Activated naive CD8-positive, alpha-beta T cell treated with anti-CD3 and anti-CD28 coated beads, Interleukin-2, amount 10 ng/mL, durations not matched to agents 7 days and 5 days (primary cell): ENCODE measurements at regions of chr12 and their contacts with region 1.

Region 1: DNA sequence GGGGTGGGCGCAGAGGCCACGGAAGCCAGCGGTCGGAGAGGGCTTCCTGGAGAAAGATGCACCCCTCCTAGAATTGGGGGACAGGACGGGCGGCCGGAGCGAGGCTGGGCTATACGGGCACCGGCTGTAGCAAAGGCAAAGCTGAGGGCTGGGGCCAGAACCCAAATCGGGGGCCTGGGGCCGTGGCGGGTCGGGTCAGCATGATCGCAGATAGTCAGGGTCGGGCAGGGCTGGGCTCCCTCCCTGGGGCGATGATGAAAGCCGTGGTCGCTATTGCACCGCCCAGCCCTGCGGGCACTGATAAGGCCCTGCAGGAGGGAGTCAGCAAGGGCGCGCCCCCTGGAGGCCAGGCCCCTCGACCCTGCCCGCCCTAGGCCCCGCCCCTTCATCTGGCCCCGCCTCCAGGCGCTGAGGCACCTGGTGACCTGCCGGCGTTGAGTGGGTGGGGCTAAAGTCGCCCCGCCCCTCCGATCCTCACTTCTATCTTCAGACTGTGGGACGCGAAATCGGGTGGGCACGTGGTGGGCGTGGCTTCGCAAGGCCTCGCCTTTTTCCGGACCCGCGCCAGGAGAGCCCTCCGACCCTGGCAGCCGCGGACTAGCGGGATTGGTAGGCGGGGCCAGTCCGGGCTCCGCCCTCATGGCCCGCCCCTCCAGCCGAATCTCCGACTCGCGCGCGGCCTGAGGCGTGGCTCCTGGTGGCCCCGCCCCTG is 418 bp upstream of the SH2B3 start:
- DNase-seq: peak; percentile 100
- ATAC-seq: peak; percentile 78
- H3K4me3 Mint-ChIP-seq: peak overlapping the region; percentile 95
- H3K27ac Mint-ChIP-seq: peak overlapping the region; percentile 94
- H3K4me1 Mint-ChIP-seq: peaks cover 45% of the 10 kb centered on the region
- H3K27me3 Mint-ChIP-seq: no peaks in the 10 kb centered on the region

Region 2: GRCh38 chr12:111444925-111445725 is 39.8 kb after region 1 on chr12:
- POLR2A ChIA-PET with region 1: interaction called, 52 read pairs
- DNase-seq: peak; percentile 77
- ATAC-seq: peak; percentile 94
- H3K4me3 Mint-ChIP-seq: peak overlapping the region; percentile 76
- H3K27ac Mint-ChIP-seq: peak overlapping the region; percentile 91
- H3K4me1 Mint-ChIP-seq: peaks cover 70% of the 10 kb centered on the region
- H3K27me3 Mint-ChIP-seq: no peaks in the 10 kb centered on the region

Region 3: GRCh38 chr12:111451649-111452129 is 46.4 kb after region 1 on chr12:
- POLR2A ChIA-PET with region 1: interaction called, 30 read pairs
- DNase-seq: no peak
- ATAC-seq: peak; percentile 30
- H3K4me3 Mint-ChIP-seq: no peak overlapping the region
- H3K27ac Mint-ChIP-seq: peak overlapping the region; percentile 15
- H3K4me1 Mint-ChIP-seq: peaks cover 36% of the 10 kb centered on the region
- H3K27me3 Mint-ChIP-seq: no peaks in the 10 kb centered on the region